Right ventricle myocardium superior (tissue), 1 donor: ENCODE measurements at regions of chr11 and their contacts with region 1.

Region 1: GRCh38 chr11:44621140-44621681 is 55.7 kb downstream of the CD82 start:
- DNase-seq: peak; percentile 88
- ATAC-seq: peak; percentile 84

Region 2: GRCh38 chr11:43708776-43709175 is 912.4 kb before region 1 on chr11:
- intact Hi-C with region 1: no loop called
- DNase-seq: no peak
- ATAC-seq: no peak

Region 3: GRCh38 chr11:44057340-44057739 is 563.9 kb before region 1 on chr11:
- intact Hi-C with region 1: no loop called
- DNase-seq: no peak
- ATAC-seq: no peak

Region 4: GRCh38 chr11:44556735-44557409 is 64.3 kb before region 1 on chr11:
- intact Hi-C with region 1: loop called (anchors 2 kb)
- DNase-seq: peak; percentile 81
- ATAC-seq: peak; percentile 89

Region 5: DNA sequence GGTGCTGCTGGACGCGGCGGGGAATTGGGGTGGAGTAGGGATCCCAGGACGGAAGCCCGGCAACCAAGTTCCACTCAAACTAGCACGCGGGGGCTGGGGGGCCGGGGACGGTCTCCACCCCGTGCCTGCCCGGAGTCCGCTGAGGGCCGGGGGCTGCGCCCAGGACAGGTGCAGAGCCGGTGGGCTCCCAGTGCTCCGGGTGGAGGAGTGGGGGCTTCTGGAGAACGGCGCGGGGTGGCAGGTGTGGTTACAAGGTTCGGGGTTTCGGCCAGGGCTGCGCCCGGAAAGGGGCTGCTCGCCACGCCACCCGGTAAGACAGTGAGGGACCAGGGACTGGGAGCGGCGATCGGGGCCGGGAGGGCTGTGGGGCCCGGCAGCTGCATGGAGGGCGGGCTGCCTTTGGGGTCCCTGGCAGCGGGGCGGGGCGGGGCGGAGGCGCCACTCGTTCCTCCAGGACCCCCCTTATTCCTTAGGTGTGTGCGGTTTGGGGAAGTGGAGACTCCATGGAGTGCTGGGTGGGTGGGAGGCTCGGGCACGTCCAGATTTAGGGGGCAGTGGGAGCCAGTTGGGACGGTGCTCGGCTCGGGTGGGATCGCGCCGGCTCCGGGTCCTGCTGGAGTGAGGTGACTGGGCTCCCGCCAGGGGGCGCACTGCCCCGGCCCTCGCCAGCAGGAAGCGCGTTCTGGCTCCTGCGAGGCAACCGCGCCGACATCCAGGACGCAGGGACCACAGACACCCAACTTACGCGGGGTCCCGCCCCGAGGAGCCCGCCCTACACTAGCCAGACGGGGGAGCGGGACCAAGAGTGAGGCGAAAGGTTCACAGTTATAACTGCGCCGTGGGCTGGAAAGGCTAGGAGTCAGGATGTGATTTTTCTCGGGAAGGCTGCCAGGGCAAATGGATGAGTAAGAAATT is 106.4 kb after region 1 on chr11:
- intact Hi-C with region 1: loop called (anchors 5 kb)
- DNase-seq: peak; percentile 92
- ATAC-seq: peak; percentile 92

Region 6: GRCh38 chr11:44899959-44900358 is 278.7 kb after region 1 on chr11:
- intact Hi-C with region 1: loop called (anchors 5 kb)
- DNase-seq: no peak
- ATAC-seq: no peak

Region 7: GRCh38 chr11:44911029-44911814 is 290.0 kb after region 1 on chr11:
- intact Hi-C with region 1: loop called (anchors 5 kb)
- DNase-seq: peak; percentile 75
- ATAC-seq: peak; percentile 88

Region 8: DNA sequence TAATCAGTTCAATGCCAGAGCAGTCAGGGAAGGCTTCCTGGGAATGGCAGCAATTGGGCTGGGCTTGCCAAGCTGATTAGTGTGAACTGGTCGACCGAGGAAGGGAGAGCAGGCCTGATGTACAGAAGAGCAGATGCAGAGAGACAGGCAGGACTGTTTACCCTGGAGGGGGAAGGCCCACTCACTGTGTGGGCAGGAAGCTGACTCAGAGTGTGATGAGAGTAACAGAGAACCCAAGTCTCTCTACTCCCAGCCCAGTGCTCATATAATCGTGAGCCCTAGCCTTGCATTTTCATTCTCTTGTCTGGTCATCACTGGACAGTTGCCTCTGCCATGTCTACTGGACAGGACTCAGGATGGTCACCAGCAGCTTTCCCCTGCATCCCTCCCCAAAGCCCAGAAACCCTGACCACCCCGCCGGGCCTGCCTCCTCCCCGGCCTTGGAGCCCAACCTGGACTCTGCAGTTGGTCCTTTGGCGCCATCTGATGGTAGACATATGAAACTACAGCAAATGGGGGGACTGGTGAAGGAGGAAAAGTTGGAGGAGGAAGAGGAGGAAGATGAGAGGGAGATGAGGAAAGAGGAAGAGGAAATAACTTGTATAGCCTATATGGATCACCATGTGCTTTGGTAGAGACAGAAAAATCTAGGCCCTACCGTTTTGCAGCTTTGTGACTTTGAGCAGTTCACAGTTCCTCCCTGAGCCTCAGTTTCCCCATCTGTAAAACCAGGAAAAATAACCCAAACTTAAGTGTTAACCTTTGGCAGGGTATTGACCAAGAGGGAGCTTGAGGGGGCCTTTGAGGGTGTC is 481.8 kb after region 1 on chr11:
- intact Hi-C with region 1: loop called (anchors 10 kb)
- DNase-seq: peak; percentile 61
- ATAC-seq: peak; percentile 70